Activated B cell treated with CpG ODN at 0.5 μM for 24 hours (primary cell): ENCODE measurements at regions of chr5 and their contacts with region 1.

Region 1: DNA sequence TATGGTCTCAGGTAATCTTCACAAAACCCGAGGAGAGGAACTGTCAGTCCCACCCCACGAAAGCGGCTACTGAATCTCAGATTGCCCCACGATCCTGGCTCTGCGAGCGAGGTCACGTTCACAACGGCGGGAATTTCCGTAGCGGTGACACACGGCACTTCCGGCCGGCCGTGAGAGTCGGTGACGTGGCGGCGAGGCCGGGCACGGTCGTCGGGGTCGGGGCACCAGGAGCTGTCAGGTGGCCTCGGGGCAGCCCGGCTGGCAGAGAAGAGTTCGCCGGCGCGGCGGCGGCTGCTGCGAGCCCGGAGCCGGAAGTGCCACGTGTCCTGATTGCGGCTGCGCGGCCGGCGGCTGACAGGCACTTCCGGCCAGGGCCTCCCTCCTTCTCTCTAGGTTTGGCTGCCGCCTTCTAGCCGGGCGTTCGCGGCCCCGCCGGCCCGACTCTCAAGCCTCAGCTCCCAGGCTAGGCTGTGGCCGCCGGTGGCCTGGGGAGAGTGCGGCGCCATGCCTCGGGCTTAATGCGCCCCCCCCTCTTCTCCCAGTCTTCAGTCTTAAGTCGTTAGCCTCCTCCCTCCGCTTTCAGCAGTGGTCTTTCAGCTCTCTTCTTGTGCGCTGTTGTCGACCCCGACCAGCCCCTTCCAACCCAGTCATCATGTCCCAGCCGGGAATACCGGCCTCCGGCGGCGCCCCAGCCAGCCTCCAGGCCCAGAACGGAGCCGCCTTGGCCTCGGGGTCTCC is at the start of gene SEC24A:
- DNase-seq: peak; percentile 86
- ATAC-seq: peak; percentile 77
- H3K4me3 Mint-ChIP-seq: peak within 1 kb of the TSS; percentile 91
- H3K27ac Mint-ChIP-seq: peak within 1 kb of the TSS; percentile 96
- H3K4me1 Mint-ChIP-seq: peaks cover 22% of the 10 kb centered on the region
- H3K27me3 Mint-ChIP-seq: no peaks in the 10 kb centered on the region
- CTCF ChIP-seq: no peak
- total RNA-seq, gene SEC24A: 13.8 and 15.6 TPM in 2 replicates

Region 2: DNA sequence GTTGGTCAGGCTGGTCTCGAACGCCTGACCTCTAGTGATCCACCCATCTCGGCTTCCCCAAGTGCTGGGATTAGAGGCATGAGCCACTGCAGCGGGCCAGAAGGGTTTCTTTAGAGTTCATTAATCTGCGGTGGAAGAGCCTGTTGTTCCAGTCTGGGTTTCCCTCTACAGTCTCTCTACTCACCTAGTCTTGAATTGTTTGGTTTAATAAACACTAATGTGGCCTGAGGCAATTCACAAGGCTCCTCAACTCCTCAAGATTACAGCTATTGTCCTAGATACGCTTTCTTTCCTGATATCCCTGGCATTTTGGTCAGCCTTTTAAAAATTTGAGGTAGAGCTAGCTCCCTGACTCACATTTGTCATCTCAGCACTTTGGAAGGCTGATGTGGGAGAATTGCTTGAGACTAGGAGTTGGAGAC is 11.4 kb before region 1 on chr5:
- CTCF ChIA-PET with region 1: interaction called, 4 read pairs
- POLR2A ChIA-PET with region 1: interaction called, 6 read pairs
- intact Hi-C with region 1: loop called (anchors 1 kb)
- DNase-seq: no peak
- ATAC-seq: no peak
- H3K4me3 Mint-ChIP-seq: no peak overlapping the region
- H3K27ac Mint-ChIP-seq: no peak overlapping the region
- H3K4me1 Mint-ChIP-seq: peaks cover 2% of the 10 kb centered on the region
- H3K27me3 Mint-ChIP-seq: no peaks in the 10 kb centered on the region
- CTCF ChIP-seq: no peak

Region 3: GRCh38 chr5:134813407-134813806 is 164.8 kb after region 1 on chr5:
- CTCF ChIA-PET with region 1: no interaction called
- POLR2A ChIA-PET with region 1: no interaction called
- intact Hi-C with region 1: no loop called
- DNase-seq: no peak
- ATAC-seq: peak; percentile 73
- H3K4me3 Mint-ChIP-seq: peak overlapping the region; percentile 15
- H3K27ac Mint-ChIP-seq: peak overlapping the region; percentile 74
- H3K4me1 Mint-ChIP-seq: peaks cover 17% of the 10 kb centered on the region
- H3K27me3 Mint-ChIP-seq: no peaks in the 10 kb centered on the region
- CTCF ChIP-seq: no peak